ENCODE measurements at regions of chr12 and their contacts with region 1.

Region 1: GRCh38 chr12:93502802-93503623 is 35.7 kb downstream of the MRPL42 start:
- DNase-seq: peak; percentile 70
- ATAC-seq: peak; percentile 44
- H3K4me3 Mint-ChIP-seq: no peak overlapping the region
- H3K27ac Mint-ChIP-seq: no peak overlapping the region
- H3K4me1 Mint-ChIP-seq: peaks cover 10% of the 10 kb centered on the region
- H3K27me3 Mint-ChIP-seq: no peaks in the 10 kb centered on the region

Region 2: DNA sequence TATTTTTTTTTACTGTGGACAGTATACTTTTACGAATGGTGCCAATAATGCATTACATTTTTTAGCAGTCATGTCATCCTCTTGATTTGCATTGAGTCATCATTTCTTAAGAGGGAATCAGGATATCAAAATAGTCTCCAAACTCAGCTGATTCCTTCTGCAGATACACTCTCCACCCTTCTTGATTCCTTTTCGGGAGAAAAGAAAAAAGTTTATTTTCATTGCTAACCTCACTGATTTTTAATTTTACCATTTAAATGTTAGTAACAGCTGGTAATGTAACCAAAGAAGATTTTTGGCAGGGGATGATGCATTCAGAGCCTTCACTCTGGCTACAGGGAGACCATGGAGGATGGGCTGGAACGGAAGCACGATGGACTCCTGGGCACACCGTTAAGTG is 11.8 kb after region 1 on chr12:
- CTCF ChIA-PET with region 1: interaction called, 13 read pairs
- POLR2A ChIA-PET with region 1: no interaction called
- intact Hi-C with region 1: no loop called
- DNase-seq: no peak
- ATAC-seq: no peak
- H3K4me3 Mint-ChIP-seq: no peak overlapping the region
- H3K27ac Mint-ChIP-seq: no peak overlapping the region
- H3K4me1 Mint-ChIP-seq: no peaks in the 10 kb centered on the region
- H3K27me3 Mint-ChIP-seq: no peaks in the 10 kb centered on the region

Region 3: GRCh38 chr12:93742110-93742934 is 239.3 kb after region 1 on chr12:
- CTCF ChIA-PET with region 1: interaction called, 7 read pairs
- POLR2A ChIA-PET with region 1: no interaction called
- intact Hi-C with region 1: loop called (anchors 10 kb)
- DNase-seq: peak; percentile 74
- ATAC-seq: peak; percentile 88
- H3K4me3 Mint-ChIP-seq: peak overlapping the region; percentile 80
- H3K27ac Mint-ChIP-seq: peak overlapping the region; percentile 90
- H3K4me1 Mint-ChIP-seq: peaks cover 21% of the 10 kb centered on the region
- H3K27me3 Mint-ChIP-seq: peaks cover 2% of the 10 kb centered on the region

Region 4: GRCh38 chr12:93766796-93767523 is 263.9 kb after region 1 on chr12:
- CTCF ChIA-PET with region 1: interaction called, 19 read pairs
- POLR2A ChIA-PET with region 1: no interaction called
- intact Hi-C with region 1: loop called in 1 of 2 experiments (anchors 5 kb)
- DNase-seq: peak; percentile 54
- ATAC-seq: peak; percentile 75
- H3K4me3 Mint-ChIP-seq: no peak overlapping the region
- H3K27ac Mint-ChIP-seq: no peak overlapping the region
- H3K4me1 Mint-ChIP-seq: peaks cover 22% of the 10 kb centered on the region
- H3K27me3 Mint-ChIP-seq: no peaks in the 10 kb centered on the region

Region 5: DNA sequence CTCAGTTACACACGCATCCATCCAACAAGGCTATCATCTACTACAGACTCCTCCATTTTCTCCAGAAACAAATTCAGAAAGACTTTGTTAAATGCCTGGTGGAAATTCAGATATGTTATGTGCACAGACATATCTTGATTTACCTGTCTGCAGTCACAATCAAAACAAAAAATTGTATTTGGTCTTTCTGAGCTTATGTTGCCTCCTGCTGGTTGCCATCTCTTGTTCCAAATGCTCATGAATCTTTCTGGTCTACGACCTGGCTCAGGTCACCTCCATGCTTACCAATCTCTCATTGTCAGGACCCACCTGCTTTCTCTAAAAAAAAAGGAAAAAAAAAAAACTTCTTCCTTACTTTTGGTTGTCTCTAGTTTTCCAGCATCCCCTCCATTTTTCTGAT is 476.2 kb after region 1 on chr12:
- CTCF ChIA-PET with region 1: interaction called, 5 read pairs
- POLR2A ChIA-PET with region 1: no interaction called
- intact Hi-C with region 1: loop called (anchors 1 to 5 kb)
- DNase-seq: peak; percentile 43
- ATAC-seq: no peak
- H3K4me3 Mint-ChIP-seq: no peak overlapping the region
- H3K27ac Mint-ChIP-seq: no peak overlapping the region
- H3K4me1 Mint-ChIP-seq: peaks cover 22% of the 10 kb centered on the region
- H3K27me3 Mint-ChIP-seq: peaks cover 12% of the 10 kb centered on the region

Measured in activated CD4-positive, alpha-beta T cell treated with anti-CD3 and anti-CD28 coated beads for 36 hours (primary cell).